ENCODE measurements at regions of chr2 and their contacts with region 1.

Region 1: DNA sequence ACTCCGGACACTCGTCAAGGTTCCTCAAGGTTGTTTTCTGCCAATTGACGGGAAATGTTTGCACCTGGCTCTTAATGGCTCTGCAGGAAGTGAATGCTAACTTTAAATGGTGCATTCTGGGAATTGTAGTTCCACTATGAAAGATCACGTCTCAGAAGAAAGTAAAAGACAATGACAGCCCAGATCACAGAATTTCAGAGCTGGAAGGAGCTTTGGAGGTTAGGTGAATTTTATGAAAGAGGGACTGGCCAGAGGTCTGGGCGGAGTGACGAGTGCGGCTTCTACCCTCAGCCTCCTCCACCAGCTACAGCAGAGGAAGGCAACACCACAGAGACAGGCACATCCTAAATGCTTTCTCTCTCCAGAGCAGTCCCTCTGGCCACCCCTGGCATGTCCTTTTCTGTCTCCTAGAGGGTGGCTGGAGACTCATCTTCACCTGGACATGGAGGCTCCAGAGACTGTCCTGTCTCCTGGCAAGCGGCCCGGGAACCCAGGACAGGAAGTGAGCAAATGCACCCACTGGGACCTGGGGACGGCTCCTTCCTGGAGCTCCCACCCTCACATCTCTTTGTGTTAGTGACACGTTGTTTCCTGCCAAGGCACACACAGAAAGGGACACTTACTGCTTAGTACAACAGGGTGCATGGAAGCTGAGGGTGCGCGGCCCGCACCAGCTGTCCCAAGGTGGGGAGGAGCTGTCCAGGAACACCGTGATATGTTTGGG is 19.4 kb downstream of the THAP4 start:
- DNase-seq: peak; percentile 58
- ATAC-seq: peak; percentile 38
- H3K4me3 Mint-ChIP-seq: peak overlapping the region; percentile 66
- H3K27ac Mint-ChIP-seq: peak overlapping the region; percentile 98
- H3K4me1 Mint-ChIP-seq: peaks cover 51% of the 10 kb centered on the region
- H3K27me3 Mint-ChIP-seq: no peaks in the 10 kb centered on the region

Region 2: GRCh38 chr2:240624950-240625621 is 992.5 kb before region 1 on chr2 and contains the start of gene GPR35:
- CTCF ChIA-PET with region 1: no interaction called
- POLR2A ChIA-PET with region 1: no interaction called
- intact Hi-C with region 1: loop called in 1 of 2 experiments (anchors 5 kb)
- DNase-seq: peak; percentile 87
- ATAC-seq: peak; percentile 53
- H3K4me3 Mint-ChIP-seq: peak within 1 kb of the TSS; percentile 43
- H3K27ac Mint-ChIP-seq: peak within 1 kb of the TSS; percentile 84
- H3K4me1 Mint-ChIP-seq: peaks cover 52% of the 10 kb centered on the region
- H3K27me3 Mint-ChIP-seq: no peaks in the 10 kb centered on the region
- total RNA-seq, gene GPR35: 3.6 to 4.1 TPM

Region 3: GRCh38 chr2:241179899-241180298 is 437.7 kb before region 1 on chr2:
- CTCF ChIA-PET with region 1: no interaction called
- POLR2A ChIA-PET with region 1: no interaction called
- intact Hi-C with region 1: loop called in 1 of 2 experiments (anchors 1 kb)
- DNase-seq: peak; percentile 69
- ATAC-seq: peak; percentile 92
- H3K4me3 Mint-ChIP-seq: no peak overlapping the region
- H3K27ac Mint-ChIP-seq: peak overlapping the region; percentile 47
- H3K4me1 Mint-ChIP-seq: peaks cover 13% of the 10 kb centered on the region
- H3K27me3 Mint-ChIP-seq: no peaks in the 10 kb centered on the region

Region 4: GRCh38 chr2:241637000-241637791 is 19.6 kb after region 1 on chr2 and contains the starts of genes ATG4B and THAP4:
- CTCF ChIA-PET with region 1: interaction called, 4 read pairs
- POLR2A ChIA-PET with region 1: no interaction called
- intact Hi-C with region 1: loop called in 1 of 2 experiments (anchors 1 kb)
- DNase-seq: peak; percentile 90
- ATAC-seq: peak; percentile 69
- H3K4me3 Mint-ChIP-seq: peak within 1 kb of the TSS; percentile 84
- H3K27ac Mint-ChIP-seq: peak within 1 kb of the TSS; percentile 96
- H3K4me1 Mint-ChIP-seq: peaks cover 50% of the 10 kb centered on the region
- H3K27me3 Mint-ChIP-seq: no peaks in the 10 kb centered on the region
- total RNA-seq, gene ATG4B: 71.8 to 80.1 TPM
- total RNA-seq, gene THAP4: 42.5 to 54.1 TPM

Region 5: DNA sequence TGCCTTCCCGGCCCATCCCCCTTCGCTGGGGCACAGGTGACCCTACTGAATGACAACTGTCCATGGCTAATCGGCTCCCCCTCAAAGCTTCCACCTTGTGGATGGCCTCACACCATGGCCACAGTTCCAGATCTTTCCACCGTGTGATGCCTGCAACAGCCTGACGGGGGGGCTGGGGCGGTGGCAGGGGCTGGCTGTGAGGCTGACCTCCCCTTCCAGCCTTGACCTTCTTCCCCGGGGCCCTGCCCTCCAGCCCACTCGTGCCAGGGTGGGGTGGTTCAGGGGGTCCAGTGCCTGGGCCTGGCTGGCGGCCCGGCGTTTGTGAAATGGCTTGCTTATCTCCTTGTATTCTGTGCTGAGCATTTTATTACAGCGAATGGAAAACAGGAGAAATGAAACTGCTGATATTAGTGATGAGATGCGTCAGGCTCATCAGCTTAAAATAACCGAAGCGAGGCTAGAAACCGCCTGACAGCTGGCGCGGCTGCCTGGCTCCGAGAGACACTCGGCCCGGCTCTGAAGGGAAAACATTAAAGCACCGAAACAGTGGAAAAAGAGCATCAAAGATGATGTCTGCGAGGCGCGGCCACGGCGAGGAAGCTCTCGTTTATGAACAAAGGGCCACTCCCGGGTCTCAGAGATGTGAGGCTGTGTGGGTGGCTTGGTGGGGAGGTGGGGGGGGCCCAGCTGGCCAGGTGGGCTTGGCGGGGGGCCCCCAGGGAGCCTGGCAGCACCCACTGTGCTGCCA is 242.0 kb after region 1 on chr2:
- CTCF ChIA-PET with region 1: no interaction called
- POLR2A ChIA-PET with region 1: no interaction called
- intact Hi-C with region 1: loop called in 1 of 2 experiments (anchors 1 kb)
- DNase-seq: peak; percentile 88
- ATAC-seq: peak; percentile 47
- H3K4me3 Mint-ChIP-seq: peak overlapping the region; percentile 85
- H3K27ac Mint-ChIP-seq: peak overlapping the region; percentile 95
- H3K4me1 Mint-ChIP-seq: peaks cover 63% of the 10 kb centered on the region
- H3K27me3 Mint-ChIP-seq: peaks cover 11% of the 10 kb centered on the region

Measured in activated CD4-positive, alpha-beta T cell treated with anti-CD3 and anti-CD28 coated beads for 36 hours (primary cell).